GM12878 (cell line): ENCODE measurements at regions of chr4 and their contacts with region 1.

Region 1: GRCh38 chr4:93710101-93710846 is 118.3 kb upstream of the ATOH1 start:
- DNase-seq: peak; percentile 4
- ATAC-seq: peak; percentile 94
- H3K4me3 ChIP-seq: no peak overlapping the region
- H3K27ac ChIP-seq: no peak overlapping the region
- H3K4me1 ChIP-seq: no peaks in the 10 kb centered on the region
- H3K27me3 ChIP-seq: no peaks in the 10 kb centered on the region
- CTCF ChIP-seq: peak; percentile 49 to 73 (median 55); a peak in 5 of 6 replicates
- EP300 ChIP-seq: no peak
- POLR2A ChIP-seq: no peak
- RAD21 ChIP-seq: peak; percentile 99

Region 2: GRCh38 chr4:93748943-93749761 is 38.9 kb after region 1 on chr4:
- CTCF ChIA-PET with region 1: interaction called, 10 read pairs
- POLR2A ChIA-PET with region 1: no interaction called
- RAD21 ChIA-PET with region 1: interaction called, 12 read pairs
- SMC1A ChIA-PET with region 1: interaction called, 9 read pairs
- in situ Hi-C with region 1: no loop called
- intact Hi-C with region 1: no loop called
- DNase-seq: peak; percentile 57
- ATAC-seq: peak; percentile 91
- H3K4me3 ChIP-seq: peak overlapping the region; percentile 31; the same call in 1 of the 2 replicates
- H3K27ac ChIP-seq: peak overlapping the region; percentile 69
- H3K4me1 ChIP-seq: peaks cover 10% of the 10 kb centered on the region; the same call in 1 of the 2 replicates
- H3K27me3 ChIP-seq: no peaks in the 10 kb centered on the region
- CTCF ChIP-seq: no peak
- EP300 ChIP-seq: peak; percentile 52 to 85; a peak in 2 of 4 replicates
- POLR2A ChIP-seq: no peak
- RAD21 ChIP-seq: no peak